ENCODE measurements at regions of chr21 and their contacts with region 1.

Region 1: GRCh38 chr21:28922368-28922767 is 70.3 kb downstream of the LTN1 start:
- DNase-seq: no peak
- H3K4me3 ChIP-seq: no peak overlapping the region
- H3K27me3 ChIP-seq: no peaks in the 10 kb centered on the region
- CTCF ChIP-seq: no peak

Region 2: GRCh38 chr21:28387220-28387619 is 535.1 kb before region 1 on chr21:
- CTCF ChIA-PET with region 1: no interaction called
- POLR2A ChIA-PET with region 1: interaction called, 12 read pairs
- DNase-seq: no peak
- H3K4me3 ChIP-seq: no peak overlapping the region
- H3K27me3 ChIP-seq: no peaks in the 10 kb centered on the region
- CTCF ChIP-seq: no peak

Measured in BJ (cell line).